ENCODE measurements at regions of chr7 and their contacts with region 1.

Region 1: GRCh38 chr7:78323118-78323517 is 524.5 kb downstream of the PHTF2 start:
- DNase-seq: no peak
- ATAC-seq: no peak
- H3K4me3 ChIP-seq: no peak overlapping the region
- H3K27ac ChIP-seq: no peak overlapping the region
- H3K4me1 ChIP-seq: peaks cover 0 to 10% (median 0%) of the 10 kb centered on the region in 9 donors
- H3K27me3 ChIP-seq: no peaks in the 10 kb centered on the region
- CTCF ChIP-seq: no peak

Region 2: DNA sequence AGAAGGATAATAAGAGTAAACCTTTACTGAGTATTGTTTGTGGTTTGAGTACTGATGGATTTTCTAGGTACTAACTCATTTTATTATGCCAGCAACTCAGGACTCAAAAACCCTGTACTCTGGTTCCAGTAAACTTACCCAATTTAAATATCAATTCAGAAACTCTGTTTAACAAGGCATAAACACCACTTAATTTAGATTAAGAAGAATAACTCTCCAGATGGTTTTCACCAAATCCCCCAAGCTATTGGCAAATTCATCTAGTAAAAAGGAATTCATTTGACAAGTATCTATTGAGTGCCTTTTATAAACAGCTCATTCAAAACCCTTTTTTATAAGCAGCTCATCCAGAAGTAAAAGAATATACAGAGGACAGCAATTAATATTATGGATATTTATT is 47.8 kb after region 1 on chr7:
- intact Hi-C with region 1: loop called in 1 of 10 experiments (anchors 5 kb)
- DNase-seq: no peak
- ATAC-seq: no peak
- H3K4me3 ChIP-seq: no peak overlapping the region
- H3K27ac ChIP-seq: no peak overlapping the region
- H3K4me1 ChIP-seq: no peaks in the 10 kb centered on the region
- H3K27me3 ChIP-seq: no peaks in the 10 kb centered on the region
- CTCF ChIP-seq: no peak